PC-3 (cell line): ENCODE measurements at regions of chr14 and their contacts with region 1.

Region 1: GRCh38 chr14:27061299-27061698 is 463.5 kb upstream of the NOVA1 start:
- DNase-seq: no peak
- ATAC-seq: no peak
- H3K4me3 ChIP-seq: no peak overlapping the region
- H3K27ac ChIP-seq: no peak overlapping the region
- H3K4me1 ChIP-seq: no peaks in the 10 kb centered on the region
- H3K27me3 ChIP-seq: no peaks in the 10 kb centered on the region
- CTCF ChIP-seq: no peak

Region 2: GRCh38 chr14:27127838-27128237 is 66.5 kb after region 1 on chr14:
- CTCF ChIA-PET with region 1: no interaction called
- POLR2A ChIA-PET with region 1: interaction called, 11 read pairs
- intact Hi-C with region 1: no loop called
- DNase-seq: no peak
- ATAC-seq: no peak
- H3K4me3 ChIP-seq: no peak overlapping the region
- H3K27ac ChIP-seq: no peak overlapping the region
- H3K4me1 ChIP-seq: no peaks in the 10 kb centered on the region
- H3K27me3 ChIP-seq: no peaks in the 10 kb centered on the region
- CTCF ChIP-seq: no peak